ENCODE measurements at regions of chr1 and their contacts with region 1.

Region 1: DNA sequence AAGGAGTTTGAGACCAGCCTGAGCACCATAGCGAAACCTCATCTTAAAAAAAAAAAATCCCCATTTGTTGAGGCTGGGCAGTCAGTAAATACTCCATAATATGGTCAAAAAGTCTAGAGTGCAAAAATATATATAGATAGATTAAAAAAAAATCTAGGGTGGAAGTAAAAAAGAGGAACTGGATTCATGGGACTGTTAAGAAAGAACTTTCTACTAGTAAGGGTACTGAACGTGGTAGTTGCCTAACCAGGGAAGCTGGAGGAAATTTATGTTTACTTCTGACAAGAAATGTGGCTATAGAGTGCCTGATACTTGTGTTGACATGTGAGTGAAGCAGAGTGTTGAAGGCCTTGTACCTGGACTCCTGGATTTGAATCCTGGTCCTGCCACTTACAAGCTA is 265.9 kb upstream of the FAM78B start:
- DNase-seq: no peak
- ATAC-seq: no peak
- H3K4me3 ChIP-seq: no peak overlapping the region
- H3K27ac ChIP-seq: no peak overlapping the region
- H3K4me1 ChIP-seq: no peaks in the 10 kb centered on the region
- H3K27me3 ChIP-seq: no peaks in the 10 kb centered on the region
- CTCF ChIP-seq: no peak
- EP300 ChIP-seq: no peak
- POLR2A ChIP-seq: no peak
- RAD21 ChIP-seq: no peak

Region 2: DNA sequence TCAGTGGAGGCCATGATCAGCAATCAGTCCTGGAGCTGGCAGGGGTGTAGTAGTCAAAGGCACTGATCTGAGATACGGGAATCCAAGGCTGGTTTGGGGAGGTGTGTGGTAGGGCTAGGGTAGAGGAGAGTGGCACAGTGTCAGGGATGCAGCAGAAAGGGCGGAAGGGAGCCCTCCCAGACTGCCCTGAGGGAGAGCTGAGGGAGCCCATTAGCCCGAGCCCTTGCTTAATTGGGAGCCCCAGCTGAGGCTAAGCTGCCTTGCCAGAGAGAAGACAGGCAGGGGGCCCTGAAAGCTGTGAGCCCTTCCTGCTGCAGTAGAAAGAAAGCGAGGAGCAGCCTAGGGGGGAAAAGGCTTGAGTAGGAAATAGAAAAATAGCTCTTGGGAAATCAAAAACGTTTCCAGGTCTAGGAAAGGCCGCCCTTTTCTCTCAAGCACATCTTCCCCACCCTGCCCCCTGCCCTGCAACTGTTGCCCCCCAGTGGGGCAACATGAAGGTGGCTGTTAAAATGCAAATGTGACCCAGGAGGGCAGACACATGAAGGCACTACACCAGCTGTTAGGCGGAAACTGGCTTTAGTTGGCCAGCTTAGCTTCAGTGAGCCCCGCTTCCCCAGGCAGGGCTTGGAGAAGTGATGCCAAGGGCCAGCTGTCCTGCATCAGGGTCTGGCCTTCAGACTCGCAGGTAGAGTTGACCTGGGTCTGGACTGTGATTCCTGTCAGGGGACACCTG is 499.0 kb before region 1 on chr1:
- CTCF ChIA-PET with region 1: interaction called, 16 read pairs
- POLR2A ChIA-PET with region 1: no interaction called
- in situ Hi-C with region 1: loop called (anchors 10 kb)
- intact Hi-C with region 1: no loop called
- DNase-seq: no peak
- ATAC-seq: no peak; the same call in 2 of the 3 replicates
- H3K4me3 ChIP-seq: no peak overlapping the region
- H3K27ac ChIP-seq: no peak overlapping the region
- H3K4me1 ChIP-seq: no peaks in the 10 kb centered on the region
- H3K27me3 ChIP-seq: peaks cover 2 to 22% of the 10 kb centered on the region in 2 experiments; a peak in 3 of 5 replicates
- CTCF ChIP-seq: no peak
- EP300 ChIP-seq: no peak
- POLR2A ChIP-seq: no peak
- RAD21 ChIP-seq: no peak

Region 3: DNA sequence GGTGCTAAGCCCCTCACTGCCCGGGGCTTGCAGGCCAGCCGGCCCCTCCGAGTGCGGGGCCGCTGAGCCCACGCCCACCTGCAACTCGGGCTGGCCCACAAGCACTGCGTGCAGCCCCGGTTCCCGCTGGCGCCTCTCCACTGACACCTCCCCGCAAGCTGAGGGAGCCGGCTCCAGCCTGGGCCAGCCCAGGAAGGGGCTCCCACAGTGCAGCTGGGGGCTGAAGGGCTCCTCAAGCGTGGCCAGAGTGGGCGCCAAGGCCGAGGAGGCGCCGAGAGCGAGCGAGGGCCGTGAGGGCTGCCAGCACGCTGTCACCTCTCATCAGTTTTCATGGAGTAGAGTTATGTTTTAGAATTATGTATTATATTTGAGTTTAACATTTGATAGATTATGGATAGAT is 89.4 kb before region 1 on chr1:
- CTCF ChIA-PET with region 1: no interaction called
- POLR2A ChIA-PET with region 1: no interaction called
- in situ Hi-C with region 1: no loop called
- intact Hi-C with region 1: no loop called
- DNase-seq: no peak
- ATAC-seq: no peak
- H3K4me3 ChIP-seq: no peak overlapping the region
- H3K27ac ChIP-seq: no peak overlapping the region
- H3K4me1 ChIP-seq: no peaks in the 10 kb centered on the region
- H3K27me3 ChIP-seq: no peaks in the 10 kb centered on the region
- CTCF ChIP-seq: no peak
- EP300 ChIP-seq: no peak
- POLR2A ChIP-seq: no peak
- RAD21 ChIP-seq: no peak

Region 4: DNA sequence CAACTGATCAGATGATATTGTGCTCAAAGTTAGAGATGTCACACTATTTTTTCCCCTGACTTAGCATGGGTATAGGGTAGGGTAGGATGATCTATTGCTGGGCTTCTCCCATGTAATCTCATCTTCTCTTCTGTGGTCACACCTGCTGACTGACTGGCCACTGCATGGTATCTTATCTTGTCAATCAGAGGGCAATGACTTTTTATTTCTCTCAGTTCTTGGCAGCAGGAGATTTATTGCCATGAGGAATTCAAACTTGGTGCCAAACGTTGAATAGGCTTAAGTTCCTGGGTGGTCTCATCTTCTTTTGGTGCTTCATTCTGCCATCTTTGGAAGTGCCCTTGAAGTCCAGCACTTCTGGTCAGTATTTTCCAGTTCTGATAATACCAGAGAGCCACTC is 180.2 kb after region 1 on chr1:
- CTCF ChIA-PET with region 1: no interaction called
- POLR2A ChIA-PET with region 1: no interaction called
- in situ Hi-C with region 1: no loop called
- intact Hi-C with region 1: no loop called
- DNase-seq: no peak
- ATAC-seq: no peak
- H3K4me3 ChIP-seq: no peak overlapping the region
- H3K27ac ChIP-seq: no peak overlapping the region
- H3K4me1 ChIP-seq: no peaks in the 10 kb centered on the region
- H3K27me3 ChIP-seq: no peaks in the 10 kb centered on the region; a peak in 1 of 5 replicates
- CTCF ChIP-seq: no peak
- EP300 ChIP-seq: no peak
- POLR2A ChIP-seq: no peak
- RAD21 ChIP-seq: no peak

Measured in HepG2 (cell line).